ENCODE measurements at regions of chr11 and their contacts with region 1.

Region 1: GRCh38 chr11:36492724-36493304 is 17.3 kb downstream of the TRAF6 start:
- DNase-seq: no peak
- H3K4me3 Mint-ChIP-seq: no peak overlapping the region
- H3K27ac Mint-ChIP-seq: no peak overlapping the region
- H3K4me1 Mint-ChIP-seq: peaks cover 16% of the 10 kb centered on the region
- H3K27me3 Mint-ChIP-seq: no peaks in the 10 kb centered on the region

Region 2: GRCh38 chr11:36300651-36301050 is 192.2 kb before region 1 on chr11:
- CTCF ChIA-PET with region 1: interaction called, 205 read pairs
- POLR2A ChIA-PET with region 1: no interaction called
- intact Hi-C with region 1: no loop called
- DNase-seq: no peak
- H3K4me3 Mint-ChIP-seq: no peak overlapping the region
- H3K27ac Mint-ChIP-seq: no peak overlapping the region
- H3K4me1 Mint-ChIP-seq: no peaks in the 10 kb centered on the region
- H3K27me3 Mint-ChIP-seq: no peaks in the 10 kb centered on the region

Region 3: GRCh38 chr11:36354221-36355003 is 138.4 kb before region 1 on chr11:
- CTCF ChIA-PET with region 1: interaction called, 27 read pairs
- POLR2A ChIA-PET with region 1: no interaction called
- intact Hi-C with region 1: loop called (anchors 1 kb)
- DNase-seq: no peak
- H3K4me3 Mint-ChIP-seq: peak overlapping the region; percentile 31
- H3K27ac Mint-ChIP-seq: peak overlapping the region; percentile 72
- H3K4me1 Mint-ChIP-seq: peaks cover 80% of the 10 kb centered on the region
- H3K27me3 Mint-ChIP-seq: peaks cover 7% of the 10 kb centered on the region

Region 4: GRCh38 chr11:36411202-36411640 is 81.6 kb before region 1 on chr11:
- CTCF ChIA-PET with region 1: interaction called, 10 read pairs
- POLR2A ChIA-PET with region 1: no interaction called
- intact Hi-C with region 1: no loop called
- DNase-seq: peak; percentile 40
- H3K4me3 Mint-ChIP-seq: peak overlapping the region; percentile 10
- H3K27ac Mint-ChIP-seq: peak overlapping the region; percentile 95
- H3K4me1 Mint-ChIP-seq: peaks cover 67% of the 10 kb centered on the region
- H3K27me3 Mint-ChIP-seq: no peaks in the 10 kb centered on the region

Region 5: GRCh38 chr11:36509694-36510566 is 17.1 kb after region 1 on chr11 and contains the start of gene TRAF6:
- CTCF ChIA-PET with region 1: interaction called, 34 read pairs
- POLR2A ChIA-PET with region 1: interaction called, 3 read pairs
- intact Hi-C with region 1: no loop called
- DNase-seq: peak; percentile 92
- H3K4me3 Mint-ChIP-seq: peak within 1 kb of the TSS; percentile 94
- H3K27ac Mint-ChIP-seq: peak within 1 kb of the TSS; percentile 86
- H3K4me1 Mint-ChIP-seq: peaks cover 27% of the 10 kb centered on the region
- H3K27me3 Mint-ChIP-seq: peaks cover 5% of the 10 kb centered on the region
- total RNA-seq, gene TRAF6: 12.0 to 12.1 TPM